IMR-90 (cell line): ENCODE measurements at regions of chr4 and their contacts with region 1.

Region 1: GRCh38 chr4:93791570-93792195 is 36.9 kb upstream of the ATOH1 start:
- DNase-seq: peak; percentile 48
- ATAC-seq: peak; percentile 87
- H3K4me3 ChIP-seq: no peak overlapping the region
- H3K27ac ChIP-seq: no peak overlapping the region
- H3K4me1 ChIP-seq: no peaks in the 10 kb centered on the region
- H3K27me3 ChIP-seq: peaks cover 5% of the 10 kb centered on the region
- CTCF ChIP-seq: peak; percentile 83
- POLR2A ChIP-seq: no peak
- RAD21 ChIP-seq: peak; percentile 84

Region 2: DNA sequence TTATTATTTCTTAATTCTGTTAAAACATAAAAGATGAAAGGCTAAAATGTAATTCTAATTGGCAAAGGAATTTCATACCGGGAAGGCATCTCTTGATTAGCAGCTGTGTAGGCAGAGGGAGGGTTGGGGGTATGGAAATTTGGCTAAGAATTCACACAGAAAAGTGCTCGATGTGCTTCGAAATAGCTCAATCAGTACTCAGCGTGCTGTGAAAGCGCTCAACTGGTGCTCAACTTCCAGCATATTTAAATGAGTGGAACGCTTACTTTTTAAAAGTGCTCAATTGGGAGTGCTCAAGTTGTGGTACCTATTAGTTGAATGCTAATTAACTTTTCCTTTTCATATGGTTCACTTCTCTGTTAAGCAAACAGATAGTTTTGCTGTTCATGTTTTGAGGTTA is 659.1 kb before region 1 on chr4:
- CTCF ChIA-PET with region 1: no interaction called
- POLR2A ChIA-PET with region 1: no interaction called
- dilution Hi-C with region 1: no loop called
- in situ Hi-C with region 1: no loop called
- intact Hi-C with region 1: no loop called
- DNase-seq: no peak
- ATAC-seq: no peak
- H3K4me3 ChIP-seq: no peak overlapping the region
- H3K27ac ChIP-seq: no peak overlapping the region
- H3K4me1 ChIP-seq: no peaks in the 10 kb centered on the region
- H3K27me3 ChIP-seq: no peaks in the 10 kb centered on the region
- CTCF ChIP-seq: no peak
- POLR2A ChIP-seq: no peak
- RAD21 ChIP-seq: no peak

Region 3: GRCh38 chr4:93199492-93199891 is 592.2 kb before region 1 on chr4:
- CTCF ChIA-PET with region 1: no interaction called
- POLR2A ChIA-PET with region 1: no interaction called
- dilution Hi-C with region 1: no loop called
- in situ Hi-C with region 1: no loop called
- intact Hi-C with region 1: no loop called
- DNase-seq: peak; percentile 29
- ATAC-seq: peak; percentile 89
- H3K4me3 ChIP-seq: no peak overlapping the region
- H3K27ac ChIP-seq: no peak overlapping the region
- H3K4me1 ChIP-seq: no peaks in the 10 kb centered on the region
- H3K27me3 ChIP-seq: no peaks in the 10 kb centered on the region; the same call in 1 of the 2 replicates
- CTCF ChIP-seq: peak; percentile 55
- POLR2A ChIP-seq: no peak
- RAD21 ChIP-seq: peak; percentile 58

Region 4: DNA sequence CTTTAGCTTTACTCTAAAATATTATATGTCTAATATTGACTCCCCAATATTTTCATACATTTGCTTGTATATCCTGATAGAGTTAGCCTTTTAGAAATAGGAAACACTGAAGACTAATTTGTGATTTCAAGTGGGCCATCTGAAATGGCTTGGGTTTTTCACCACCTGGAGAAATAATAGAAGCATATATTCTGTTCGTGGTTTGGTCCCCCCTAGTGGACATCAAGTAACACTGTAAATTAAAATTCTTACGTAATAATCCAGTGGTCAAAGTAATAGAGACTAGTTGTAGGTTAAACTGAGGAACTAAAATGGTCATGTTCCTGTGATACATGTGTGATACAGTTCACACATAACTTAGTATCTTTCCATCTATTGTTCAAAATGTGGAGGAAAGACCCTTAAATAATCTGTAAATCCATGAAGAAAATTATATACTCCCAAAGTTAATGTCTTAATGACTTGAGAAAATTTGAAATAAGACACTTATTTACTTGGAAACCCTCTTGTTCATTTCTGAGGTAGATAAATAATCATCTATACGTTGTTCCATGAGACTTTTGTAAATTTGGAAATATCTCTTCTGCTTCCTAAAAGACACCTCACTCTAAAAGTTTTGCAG is 336.1 kb after region 1 on chr4:
- CTCF ChIA-PET with region 1: interaction called, 9 read pairs
- POLR2A ChIA-PET with region 1: no interaction called
- dilution Hi-C with region 1: no loop called
- in situ Hi-C with region 1: loop called (anchors 10 kb)
- intact Hi-C with region 1: loop called (anchors 1 kb)
- DNase-seq: peak; percentile 29
- ATAC-seq: peak; percentile 66
- H3K4me3 ChIP-seq: no peak overlapping the region
- H3K27ac ChIP-seq: no peak overlapping the region
- H3K4me1 ChIP-seq: no peaks in the 10 kb centered on the region
- H3K27me3 ChIP-seq: no peaks in the 10 kb centered on the region
- CTCF ChIP-seq: peak; percentile 64
- POLR2A ChIP-seq: no peak
- RAD21 ChIP-seq: peak; percentile 37; the same call in 1 of the 2 replicates

Region 5: DNA sequence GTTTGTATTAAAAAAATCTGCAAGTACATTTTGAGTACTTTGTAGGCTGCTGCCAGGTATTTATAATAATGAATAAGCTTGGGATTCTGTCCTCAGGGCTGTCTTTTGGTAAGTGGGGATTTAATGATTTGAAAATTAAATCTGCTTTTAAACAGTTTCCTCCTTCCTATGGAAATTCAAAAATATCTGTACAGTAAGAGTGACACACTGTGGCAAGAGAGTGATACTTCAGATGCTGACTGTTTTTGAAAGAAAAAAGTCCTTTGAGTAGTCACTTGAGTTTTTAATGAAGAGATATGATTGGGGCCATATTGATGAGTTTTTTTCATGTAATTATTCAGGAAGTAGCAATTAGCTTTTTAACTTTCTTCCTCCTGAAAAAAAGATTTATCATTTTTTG is 465.1 kb after region 1 on chr4:
- CTCF ChIA-PET with region 1: no interaction called
- POLR2A ChIA-PET with region 1: no interaction called
- dilution Hi-C with region 1: no loop called
- in situ Hi-C with region 1: no loop called
- intact Hi-C with region 1: loop called (anchors 5 kb)
- DNase-seq: peak; percentile 7
- ATAC-seq: 0 out of 2 replicates have a peak, but pooled peaks have one; percentile 53
- H3K4me3 ChIP-seq: no peak overlapping the region
- H3K27ac ChIP-seq: no peak overlapping the region
- H3K4me1 ChIP-seq: no peaks in the 10 kb centered on the region
- H3K27me3 ChIP-seq: no peaks in the 10 kb centered on the region
- CTCF ChIP-seq: peak; percentile 28
- POLR2A ChIP-seq: no peak
- RAD21 ChIP-seq: peak; percentile 36

Region 6: DNA sequence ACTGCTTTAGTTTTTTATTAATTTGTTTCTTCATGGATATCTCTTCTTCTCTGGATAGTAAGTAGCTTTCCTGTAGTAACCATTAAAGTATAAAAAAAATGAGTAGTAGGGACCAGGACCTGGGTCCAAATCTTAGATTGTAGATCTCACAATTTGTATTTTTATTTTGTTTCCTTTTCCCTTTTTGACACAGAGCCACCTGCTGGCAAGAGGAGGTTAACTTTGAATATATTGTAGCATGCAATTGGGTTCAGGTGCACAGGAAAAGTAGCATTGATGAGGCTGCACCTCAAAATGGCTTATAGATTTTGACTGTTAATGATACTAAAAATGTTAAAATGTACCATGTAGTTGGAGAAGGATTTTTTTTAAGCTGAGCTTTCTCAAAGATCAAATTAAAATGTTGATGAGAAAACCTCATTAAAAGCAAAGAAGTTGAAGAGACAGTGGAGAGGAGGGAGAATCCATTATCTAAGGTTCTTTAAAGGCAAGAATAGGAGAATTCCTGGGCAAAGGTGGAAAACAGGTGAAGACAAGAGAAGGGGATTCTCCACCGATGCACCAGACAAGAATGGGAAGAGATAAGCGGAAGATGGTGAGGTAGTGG is 599.2 kb after region 1 on chr4:
- CTCF ChIA-PET with region 1: no interaction called
- POLR2A ChIA-PET with region 1: no interaction called
- dilution Hi-C with region 1: no loop called
- in situ Hi-C with region 1: loop called (anchors 10 kb)
- intact Hi-C with region 1: loop called (anchors 1 kb)
- DNase-seq: peak; percentile 4
- ATAC-seq: no peak
- H3K4me3 ChIP-seq: no peak overlapping the region
- H3K27ac ChIP-seq: no peak overlapping the region
- H3K4me1 ChIP-seq: no peaks in the 10 kb centered on the region
- H3K27me3 ChIP-seq: peaks cover 9% of the 10 kb centered on the region
- CTCF ChIP-seq: peak; percentile 58
- POLR2A ChIP-seq: no peak
- RAD21 ChIP-seq: peak; percentile 46

Region 7: GRCh38 chr4:94451695-94452475 is 660.2 kb after region 1 on chr4 and contains the start of gene PDLIM5:
- CTCF ChIA-PET with region 1: no interaction called
- POLR2A ChIA-PET with region 1: no interaction called
- dilution Hi-C with region 1: no loop called
- in situ Hi-C with region 1: no loop called
- intact Hi-C with region 1: loop called (anchors 5 kb)
- DNase-seq: peak; percentile 84
- ATAC-seq: peak; percentile 92
- H3K4me3 ChIP-seq: peak within 1 kb of the TSS; percentile 99
- H3K27ac ChIP-seq: peak within 1 kb of the TSS; percentile 93
- H3K4me1 ChIP-seq: peaks cover 7% of the 10 kb centered on the region
- H3K27me3 ChIP-seq: no peaks in the 10 kb centered on the region
- CTCF ChIP-seq: no peak
- POLR2A ChIP-seq: peak; percentile 96
- RAD21 ChIP-seq: peak; percentile 8
- total RNA-seq, gene PDLIM5: 159 and 188 TPM in 2 replicates

Region 8: GRCh38 chr4:94595879-94596483 is 804.3 kb after region 1 on chr4:
- CTCF ChIA-PET with region 1: no interaction called
- POLR2A ChIA-PET with region 1: no interaction called
- dilution Hi-C with region 1: no loop called
- in situ Hi-C with region 1: no loop called
- intact Hi-C with region 1: loop called (anchors 10 kb)
- DNase-seq: peak; percentile 74
- ATAC-seq: peak; percentile 79; the same call in 1 of the 2 replicates
- H3K4me3 ChIP-seq: no peak overlapping the region
- H3K27ac ChIP-seq: no peak overlapping the region
- H3K4me1 ChIP-seq: no peaks in the 10 kb centered on the region
- H3K27me3 ChIP-seq: no peaks in the 10 kb centered on the region
- CTCF ChIP-seq: peak; percentile 74
- POLR2A ChIP-seq: no peak
- RAD21 ChIP-seq: peak; percentile 87

Region 9: DNA sequence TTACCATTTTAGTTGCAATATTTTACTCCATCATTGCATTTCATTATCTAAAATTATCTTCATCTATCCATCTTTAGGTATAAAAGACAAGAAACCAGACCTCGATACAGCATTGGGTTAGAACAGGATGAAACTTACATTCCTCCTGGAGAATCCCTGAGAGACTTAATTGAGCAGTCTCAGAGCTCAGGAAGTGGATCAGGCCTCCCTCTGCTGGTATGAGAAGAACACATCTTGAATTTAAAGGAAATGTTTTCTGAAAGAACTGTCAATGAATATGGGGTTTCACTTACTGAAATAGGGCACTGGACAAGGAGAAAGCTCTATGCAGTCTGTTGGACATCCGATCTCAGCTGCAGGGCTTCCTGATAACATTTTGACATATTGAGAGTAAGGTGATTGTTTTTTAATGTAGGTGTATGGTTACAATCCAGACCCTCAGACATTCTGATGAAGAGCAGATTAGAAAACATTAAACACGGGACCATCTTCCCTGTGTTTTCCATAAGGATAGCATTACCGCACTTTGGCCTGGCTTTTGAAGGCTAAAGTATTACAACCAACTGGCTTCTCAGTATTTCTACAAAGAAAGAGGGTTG is 1333.3 kb after region 1 on chr4:
- CTCF ChIA-PET with region 1: no interaction called
- POLR2A ChIA-PET with region 1: no interaction called
- dilution Hi-C with region 1: no loop called
- in situ Hi-C with region 1: loop called (anchors 25 kb)
- intact Hi-C with region 1: no loop called
- DNase-seq: peak; percentile 76
- ATAC-seq: peak; percentile 89
- H3K4me3 ChIP-seq: no peak overlapping the region
- H3K27ac ChIP-seq: no peak overlapping the region
- H3K4me1 ChIP-seq: no peaks in the 10 kb centered on the region
- H3K27me3 ChIP-seq: no peaks in the 10 kb centered on the region
- CTCF ChIP-seq: peak; percentile 77
- POLR2A ChIP-seq: no peak
- RAD21 ChIP-seq: peak; percentile 80